ENCODE measurements at regions of chr12 and their contacts with region 1.

Region 1: DNA sequence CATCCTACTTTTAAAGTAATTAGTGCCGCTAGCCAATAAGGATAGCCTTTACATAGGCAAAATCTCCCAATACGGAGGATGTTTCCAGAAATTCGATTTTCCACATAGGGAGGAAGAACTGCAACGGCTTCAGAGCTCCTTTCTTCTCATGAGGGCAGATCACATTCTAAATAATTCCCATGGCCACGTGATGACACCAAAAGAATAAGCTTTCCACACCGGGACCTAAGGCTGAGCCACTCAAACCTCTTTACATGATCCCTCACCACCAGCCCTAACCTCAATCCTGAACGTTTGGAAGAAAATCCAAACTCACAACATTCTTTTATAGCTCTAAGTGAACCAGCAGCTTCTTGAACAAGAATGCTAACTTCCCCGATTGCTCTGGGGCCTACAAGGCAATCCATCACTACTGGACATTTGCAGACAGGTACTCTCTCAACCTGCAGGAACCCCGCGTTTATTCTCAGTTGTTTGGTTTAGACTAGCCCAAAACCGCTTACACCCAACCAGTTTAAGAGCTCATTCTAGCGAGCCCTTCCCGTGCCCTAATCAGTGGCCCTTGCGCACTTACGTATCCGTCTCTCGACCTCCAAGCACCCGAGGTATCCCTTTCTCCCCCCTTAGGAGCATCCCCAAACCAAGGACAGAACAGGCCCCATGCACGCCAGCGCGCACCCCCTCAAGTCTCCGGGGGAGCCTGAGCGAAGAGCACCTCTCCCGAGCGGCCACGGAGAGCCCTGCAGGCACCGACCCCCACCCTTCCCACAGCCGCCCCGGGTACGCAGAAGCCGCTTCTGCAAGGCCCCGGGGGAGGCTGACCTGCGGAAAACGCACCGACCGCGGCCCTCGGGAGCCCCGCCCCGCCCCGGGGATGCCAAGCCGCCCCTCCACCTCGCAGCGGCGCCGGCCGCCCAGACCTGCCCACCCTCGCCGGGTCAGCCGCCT is 716 bp downstream of the CAPRIN2 start:
- DNase-seq: no peak
- ATAC-seq: no peak
- H3K4me3 Mint-ChIP-seq: peak overlapping the region; percentile 87
- H3K27ac Mint-ChIP-seq: peak overlapping the region; percentile 66
- H3K4me1 Mint-ChIP-seq: peaks cover 18% of the 10 kb centered on the region
- H3K27me3 Mint-ChIP-seq: peaks cover 4% of the 10 kb centered on the region

Region 2: GRCh38 chr12:30695199-30696103 is 58.6 kb before region 1 on chr12 and contains the start of gene IPO8:
- POLR2A ChIA-PET with region 1: interaction called, 12 read pairs
- DNase-seq: peak; percentile 78
- ATAC-seq: peak; percentile 86
- H3K4me3 Mint-ChIP-seq: peak within 1 kb of the TSS; percentile 97
- H3K27ac Mint-ChIP-seq: peak within 1 kb of the TSS; percentile 94
- H3K4me1 Mint-ChIP-seq: peaks cover 27% of the 10 kb centered on the region
- H3K27me3 Mint-ChIP-seq: no peaks in the 10 kb centered on the region
- total RNA-seq, gene IPO8: 49.5 to 50.7 TPM

Region 3: DNA sequence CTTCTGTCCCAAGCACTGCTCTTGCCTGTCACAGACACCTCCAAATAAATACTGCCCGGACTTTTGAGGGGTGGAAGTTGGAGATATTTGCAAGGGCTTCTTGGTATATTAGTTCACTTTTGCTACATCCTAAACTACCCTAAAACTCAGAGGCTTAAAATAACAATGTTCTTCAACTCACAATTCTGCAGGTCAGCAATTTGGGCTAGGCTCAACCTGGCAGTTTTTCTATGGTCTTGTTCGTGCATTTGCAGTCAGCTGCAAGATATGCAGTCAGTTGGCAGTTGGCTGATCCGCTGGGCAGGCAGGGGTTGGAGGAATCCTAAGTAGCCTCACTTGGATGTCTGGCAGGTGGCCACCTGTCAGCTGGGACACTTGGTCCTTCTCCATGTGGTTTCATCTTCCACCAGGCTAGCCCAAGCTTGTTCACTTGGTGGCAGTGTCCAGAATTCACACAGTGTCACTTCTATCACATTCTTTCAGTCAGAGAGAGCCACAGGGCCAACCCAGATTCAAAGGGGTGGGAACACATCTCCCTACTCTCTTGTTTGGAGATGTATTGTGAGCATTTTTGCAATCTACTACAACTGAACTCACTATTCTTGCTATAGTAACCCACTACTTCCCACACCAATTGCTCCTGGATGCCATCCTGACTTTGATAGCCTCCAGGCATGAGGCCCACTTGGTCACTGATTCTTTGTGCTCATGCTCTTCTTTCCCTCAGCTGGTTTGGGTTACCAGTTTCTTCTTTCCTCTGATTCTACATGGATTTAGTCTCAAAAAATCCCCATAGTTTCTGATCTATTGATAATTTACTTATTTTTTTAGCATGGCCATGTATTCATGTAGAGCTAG is 28.5 kb after region 1 on chr12:
- POLR2A ChIA-PET with region 1: no interaction called
- DNase-seq: no peak
- ATAC-seq: no peak
- H3K4me3 Mint-ChIP-seq: no peak overlapping the region
- H3K27ac Mint-ChIP-seq: no peak overlapping the region
- H3K4me1 Mint-ChIP-seq: no peaks in the 10 kb centered on the region
- H3K27me3 Mint-ChIP-seq: peaks cover 29% of the 10 kb centered on the region